Thyroid gland (tissue), 4 donors: ENCODE measurements at regions of chr10 and their contacts with region 1.

Region 1: GRCh38 chr10:95363303-95363912 is 72.6 kb upstream of the PDLIM1 start:
- DNase-seq: peak; percentile 24 to 35
- H3K4me3 ChIP-seq: no peak overlapping the region
- H3K27ac ChIP-seq: no peak overlapping the region
- H3K4me1 ChIP-seq: peaks cover 6 to 27% of the 10 kb centered on the region in 2 donors
- H3K27me3 ChIP-seq: no peaks in the 10 kb centered on the region
- CTCF ChIP-seq: peak; percentile 69 to 96 (median 90)
- POLR2A ChIP-seq: no peak

Region 2: GRCh38 chr10:95208702-95209391 is 154.6 kb before region 1 on chr10:
- intact Hi-C with region 1: loop called (anchors 10 kb)
- DNase-seq: no peak
- H3K4me3 ChIP-seq: no peak overlapping the region
- H3K27ac ChIP-seq: no peak overlapping the region
- H3K4me1 ChIP-seq: no peaks in the 10 kb centered on the region
- H3K27me3 ChIP-seq: no peaks in the 10 kb centered on the region
- CTCF ChIP-seq: peak in 2 of 6 experiments; percentile 42 to 44
- POLR2A ChIP-seq: no peak

Region 3: GRCh38 chr10:95242581-95243317 is 120.7 kb before region 1 on chr10:
- intact Hi-C with region 1: no loop called
- DNase-seq: peak; percentile 68 to 69
- H3K4me3 ChIP-seq: no peak overlapping the region
- H3K27ac ChIP-seq: peak overlapping the region in 1 of 3 donors; percentile 41
- H3K4me1 ChIP-seq: peaks cover 6 to 19% of the 10 kb centered on the region in 2 donors
- H3K27me3 ChIP-seq: no peaks in the 10 kb centered on the region
- CTCF ChIP-seq: peak in 5 of 6 experiments; percentile 33 to 77 (median 67)
- POLR2A ChIP-seq: no peak